Endothelial cell of umbilical vein (primary cell): ENCODE measurements at regions of chr4 and their contacts with region 1.

Region 1: GRCh38 chr4:74444891-74445642 is at the start of gene AREG:
- DNase-seq: peak; percentile 70
- H3K4me3 ChIP-seq: peak within 1 kb of the TSS; percentile 8 to 73 (median 45)
- H3K27ac ChIP-seq: no peak within 1 kb of the TSS
- H3K4me1 ChIP-seq: peaks cover 3% of the 10 kb centered on the region
- H3K27me3 ChIP-seq: no peaks in the 10 kb centered on the region
- CTCF ChIP-seq: peak; percentile 62
- POLR2A ChIP-seq: no peak
- total RNA-seq, gene AREG: 0.46 and 0.55 TPM in 2 replicates

Region 2: GRCh38 chr4:74267998-74268606 is 177.0 kb before region 1 on chr4:
- CTCF ChIA-PET with region 1: no interaction called
- POLR2A ChIA-PET with region 1: no interaction called
- dilution Hi-C with region 1: no loop called
- intact Hi-C with region 1: no loop called
- DNase-seq: peak; percentile 14
- H3K4me3 ChIP-seq: no peak overlapping the region
- H3K27ac ChIP-seq: no peak overlapping the region
- H3K4me1 ChIP-seq: no peaks in the 10 kb centered on the region
- H3K27me3 ChIP-seq: no peaks in the 10 kb centered on the region
- CTCF ChIP-seq: no peak
- POLR2A ChIP-seq: no peak

Region 3: DNA sequence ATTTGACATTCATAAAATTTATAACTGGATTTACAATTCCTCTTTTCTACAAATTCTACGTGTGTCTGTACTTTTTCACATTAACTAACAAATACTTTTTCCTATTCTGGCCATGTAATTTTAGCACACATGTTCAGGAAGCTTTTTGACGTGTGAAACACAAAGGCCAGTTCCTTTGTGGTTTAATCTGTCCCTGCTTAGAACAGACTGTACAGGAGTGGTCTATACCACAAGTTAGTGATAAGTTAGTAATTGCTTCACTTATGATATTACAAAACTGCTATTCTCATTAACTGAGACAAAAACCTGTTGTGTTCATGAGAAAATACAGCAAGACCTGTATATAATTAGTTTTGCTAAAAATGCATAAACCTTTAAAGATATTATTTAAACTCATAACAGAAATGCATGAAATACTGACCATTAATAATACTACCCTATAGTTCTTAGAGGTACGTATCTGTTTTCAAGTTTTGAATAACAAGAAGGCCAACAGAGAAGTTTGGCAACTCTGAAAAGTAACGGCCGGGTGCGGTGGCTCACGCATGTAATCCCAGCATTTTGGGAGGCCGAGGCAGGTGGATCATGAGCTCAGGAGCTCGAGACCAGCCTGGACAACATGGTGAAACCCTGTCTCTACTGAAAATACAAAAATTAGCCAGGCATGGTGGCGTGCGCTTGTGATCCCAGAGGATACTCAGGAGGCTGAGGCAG is 13.8 kb before region 1 on chr4:
- CTCF ChIA-PET with region 1: interaction called, 9 read pairs
- POLR2A ChIA-PET with region 1: no interaction called
- dilution Hi-C with region 1: no loop called
- intact Hi-C with region 1: loop called (anchors 2 kb)
- DNase-seq: peak; percentile 66
- H3K4me3 ChIP-seq: no peak overlapping the region
- H3K27ac ChIP-seq: peak overlapping the region; percentile 43
- H3K4me1 ChIP-seq: peaks cover 19% of the 10 kb centered on the region
- H3K27me3 ChIP-seq: no peaks in the 10 kb centered on the region
- CTCF ChIP-seq: no peak
- POLR2A ChIP-seq: no peak

Region 4: GRCh38 chr4:74570095-74570494 is 125.0 kb after region 1 on chr4:
- CTCF ChIA-PET with region 1: no interaction called
- POLR2A ChIA-PET with region 1: no interaction called
- dilution Hi-C with region 1: no loop called
- intact Hi-C with region 1: no loop called
- DNase-seq: no peak
- H3K4me3 ChIP-seq: no peak overlapping the region
- H3K27ac ChIP-seq: no peak overlapping the region
- H3K4me1 ChIP-seq: no peaks in the 10 kb centered on the region
- H3K27me3 ChIP-seq: no peaks in the 10 kb centered on the region
- CTCF ChIP-seq: no peak
- POLR2A ChIP-seq: no peak